ENCODE measurements at regions of chr2 and their contacts with region 1.

Region 1: DNA sequence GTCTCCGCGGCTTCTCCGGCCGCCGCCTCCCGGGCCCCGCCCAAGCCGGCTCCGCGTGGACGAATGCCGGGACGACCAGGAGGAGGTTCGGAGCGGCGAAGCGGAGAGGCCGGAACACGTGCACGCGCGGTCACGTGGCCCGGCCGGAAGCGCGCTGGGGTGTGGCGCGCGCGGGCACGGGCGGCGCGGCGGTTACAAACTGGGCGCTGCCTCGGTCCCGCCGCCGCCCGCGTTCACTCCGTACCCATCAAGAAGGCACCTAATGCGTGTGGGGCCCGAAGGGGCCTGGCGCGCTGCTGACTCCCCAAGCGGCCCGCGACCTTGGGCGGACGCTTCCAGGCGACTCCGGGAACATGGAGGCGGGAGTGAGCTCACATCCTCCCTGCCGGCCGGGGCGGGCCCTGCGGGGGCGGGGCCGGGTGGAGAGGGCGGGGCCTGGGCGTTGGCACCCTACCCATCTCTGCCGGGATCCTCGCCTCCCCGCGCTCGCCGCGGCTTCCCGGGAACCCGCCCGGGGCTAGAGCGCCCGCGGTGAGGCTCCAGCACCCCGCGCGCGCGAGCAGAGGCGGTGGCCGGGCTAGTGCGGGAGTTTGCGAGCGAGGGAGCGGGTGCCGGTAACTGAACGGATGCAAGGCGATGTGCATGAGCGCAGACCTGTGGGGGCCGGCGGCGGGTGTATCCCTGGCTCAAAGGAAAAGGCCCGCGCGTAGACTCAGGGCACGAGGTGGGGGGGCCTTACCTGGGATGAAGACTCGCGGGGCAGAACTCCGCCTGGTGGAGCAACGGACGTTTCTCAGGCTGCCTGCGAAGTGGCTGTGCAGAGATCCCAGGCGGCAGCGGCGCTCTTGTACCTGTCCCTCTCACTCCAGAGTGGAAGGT is at the start of gene TMEM185B:
- DNase-seq: peak; percentile 93
- ATAC-seq: peak; percentile 96
- H3K4me3 ChIP-seq: peak within 1 kb of the TSS; percentile 68 to 83 (median 71)
- H3K4me3 Mint-ChIP-seq: peak within 1 kb of the TSS; percentile 89
- H3K27ac ChIP-seq: peak within 1 kb of the TSS; percentile 93 to 96
- H3K27ac Mint-ChIP-seq: peak within 1 kb of the TSS; percentile 95
- H3K4me1 ChIP-seq: peaks cover 25 to 31% of the 10 kb centered on the region in 2 donors
- H3K4me1 Mint-ChIP-seq: peaks cover 55% of the 10 kb centered on the region
- H3K27me3 ChIP-seq: no peaks in the 10 kb centered on the region
- H3K27me3 Mint-ChIP-seq: no peaks in the 10 kb centered on the region
- CTCF ChIP-seq: peak; percentile 38
- total RNA-seq, gene TMEM185B: 29.6 TPM in 2 replicates

Region 2: GRCh38 chr2:119678998-119679710 is 544.1 kb before region 1 on chr2 and contains the start of gene TMEM177:
- CTCF ChIA-PET with region 1: no interaction called
- POLR2A ChIA-PET with region 1: no interaction called
- intact Hi-C with region 1: loop called (anchors 1 kb)
- DNase-seq: peak; percentile 90
- ATAC-seq: peak; percentile 96
- H3K4me3 ChIP-seq: peak within 1 kb of the TSS; percentile 76 to 100 (median 93)
- H3K4me3 Mint-ChIP-seq: peak within 1 kb of the TSS; percentile 84
- H3K27ac ChIP-seq: peak within 1 kb of the TSS; percentile 50 to 60
- H3K27ac Mint-ChIP-seq: peak within 1 kb of the TSS; percentile 84
- H3K4me1 ChIP-seq: peaks cover 10 to 20% of the 10 kb centered on the region in 2 donors
- H3K4me1 Mint-ChIP-seq: peaks cover 23% of the 10 kb centered on the region
- H3K27me3 ChIP-seq: no peaks in the 10 kb centered on the region
- H3K27me3 Mint-ChIP-seq: no peaks in the 10 kb centered on the region
- CTCF ChIP-seq: no peak
- total RNA-seq, gene TMEM177: 10.6 and 12.1 TPM in 2 replicates

Region 3: DNA sequence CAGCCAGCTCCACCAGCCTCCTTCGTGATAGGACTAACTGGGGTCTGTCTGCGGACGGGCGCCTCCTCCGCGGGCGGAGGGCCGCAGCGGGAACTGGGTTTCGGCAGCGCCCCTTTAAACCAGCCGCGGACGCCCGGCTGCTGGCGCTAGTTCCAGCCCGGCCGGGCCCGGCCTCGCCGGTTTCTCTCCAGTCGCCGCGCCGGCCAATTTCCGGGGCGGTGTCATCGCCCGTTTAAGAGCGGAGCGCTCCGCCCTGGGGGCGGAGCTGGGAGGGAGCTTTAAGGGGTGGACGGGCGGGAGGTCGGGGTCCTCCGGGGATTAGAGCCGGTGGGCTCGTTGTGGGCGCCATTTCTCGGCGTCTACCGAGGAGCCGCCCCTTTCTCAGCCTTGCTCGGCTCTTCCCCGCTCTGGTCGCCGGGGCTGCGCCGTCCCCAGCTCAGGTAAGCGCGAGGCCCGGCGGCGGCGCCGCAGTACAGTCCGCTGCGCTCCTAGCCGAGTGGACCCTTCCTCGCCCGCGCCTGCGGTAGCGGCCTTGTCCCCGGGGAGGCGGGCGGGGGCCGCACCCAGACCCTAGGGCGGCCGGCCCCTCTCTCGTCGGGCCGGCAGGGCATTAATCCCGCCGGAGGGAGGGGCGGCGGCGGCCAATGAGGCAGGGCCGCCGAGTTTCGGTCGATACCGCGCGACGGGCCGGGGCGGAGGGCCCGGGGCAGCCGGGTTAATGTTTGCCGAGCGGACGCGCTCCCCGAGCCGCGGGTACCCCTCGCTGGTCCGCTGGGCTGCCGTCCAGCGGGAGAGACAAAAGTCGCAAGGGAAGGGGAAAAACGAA is 210.3 kb before region 1 on chr2 and contains the start of gene EPB41L5:
- CTCF ChIA-PET with region 1: interaction called, 3 read pairs
- POLR2A ChIA-PET with region 1: no interaction called
- intact Hi-C with region 1: loop called (anchors 2 kb)
- DNase-seq: peak; percentile 87
- ATAC-seq: peak; percentile 90
- H3K4me3 ChIP-seq: peak within 1 kb of the TSS; percentile 65 to 88 (median 77)
- H3K4me3 Mint-ChIP-seq: peak within 1 kb of the TSS; percentile 91
- H3K27ac ChIP-seq: peak within 1 kb of the TSS; percentile 58 to 80
- H3K27ac Mint-ChIP-seq: peak within 1 kb of the TSS; percentile 69
- H3K4me1 ChIP-seq: peaks cover 11 to 12% of the 10 kb centered on the region in 2 donors
- H3K4me1 Mint-ChIP-seq: peaks cover 30% of the 10 kb centered on the region
- H3K27me3 ChIP-seq: no peaks in the 10 kb centered on the region
- H3K27me3 Mint-ChIP-seq: no peaks in the 10 kb centered on the region
- CTCF ChIP-seq: no peak
- total RNA-seq, gene EPB41L5: 14.0 and 15.0 TPM in 2 replicates

Region 4: DNA sequence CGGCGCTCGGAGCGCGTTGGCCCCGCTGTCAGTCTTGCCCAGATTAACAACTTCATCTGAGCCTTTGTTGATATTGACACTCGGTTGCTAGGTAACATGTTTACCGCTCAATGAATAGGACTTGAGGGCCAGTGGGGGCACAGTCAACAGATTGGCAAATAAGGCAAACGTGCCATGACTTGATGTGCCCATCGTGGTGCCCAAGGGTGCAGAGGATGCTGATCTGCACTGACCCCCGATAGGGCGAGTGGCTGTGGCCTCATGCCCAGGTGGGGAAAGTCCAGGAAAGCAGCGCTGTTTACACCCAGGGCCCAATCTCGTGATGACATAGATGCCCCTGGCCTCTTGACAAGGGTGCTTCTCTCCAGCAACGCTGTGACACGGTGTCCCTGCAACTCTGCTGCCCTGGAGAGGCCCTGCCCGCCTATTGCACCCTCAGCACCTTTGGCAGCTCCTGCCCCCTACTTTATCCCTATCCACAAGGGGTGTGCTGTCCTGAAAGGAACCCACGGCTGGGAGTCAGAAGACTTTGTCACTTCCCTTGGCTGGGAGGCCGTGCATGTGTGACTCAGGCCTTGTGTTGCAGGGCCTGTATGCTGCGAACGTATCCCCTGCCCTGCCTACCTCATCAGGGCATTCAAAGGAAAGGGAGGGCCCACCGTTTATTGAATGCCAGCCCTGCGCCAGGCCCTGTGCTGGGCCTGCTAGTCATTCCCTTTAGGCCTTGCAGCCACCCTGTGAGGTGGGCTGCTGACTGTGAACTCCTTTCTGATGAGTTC is 280.7 kb after region 1 on chr2:
- CTCF ChIA-PET with region 1: no interaction called
- POLR2A ChIA-PET with region 1: no interaction called
- intact Hi-C with region 1: no loop called
- DNase-seq: no peak
- ATAC-seq: no peak
- H3K4me3 ChIP-seq: no peak overlapping the region
- H3K4me3 Mint-ChIP-seq: no peak overlapping the region
- H3K27ac ChIP-seq: no peak overlapping the region
- H3K27ac Mint-ChIP-seq: no peak overlapping the region
- H3K4me1 ChIP-seq: no peaks in the 10 kb centered on the region
- H3K4me1 Mint-ChIP-seq: no peaks in the 10 kb centered on the region
- H3K27me3 ChIP-seq: no peaks in the 10 kb centered on the region
- H3K27me3 Mint-ChIP-seq: no peaks in the 10 kb centered on the region
- CTCF ChIP-seq: no peak